ENCODE measurements at regions of chr20 and their contacts with region 1.

Region 1: DNA sequence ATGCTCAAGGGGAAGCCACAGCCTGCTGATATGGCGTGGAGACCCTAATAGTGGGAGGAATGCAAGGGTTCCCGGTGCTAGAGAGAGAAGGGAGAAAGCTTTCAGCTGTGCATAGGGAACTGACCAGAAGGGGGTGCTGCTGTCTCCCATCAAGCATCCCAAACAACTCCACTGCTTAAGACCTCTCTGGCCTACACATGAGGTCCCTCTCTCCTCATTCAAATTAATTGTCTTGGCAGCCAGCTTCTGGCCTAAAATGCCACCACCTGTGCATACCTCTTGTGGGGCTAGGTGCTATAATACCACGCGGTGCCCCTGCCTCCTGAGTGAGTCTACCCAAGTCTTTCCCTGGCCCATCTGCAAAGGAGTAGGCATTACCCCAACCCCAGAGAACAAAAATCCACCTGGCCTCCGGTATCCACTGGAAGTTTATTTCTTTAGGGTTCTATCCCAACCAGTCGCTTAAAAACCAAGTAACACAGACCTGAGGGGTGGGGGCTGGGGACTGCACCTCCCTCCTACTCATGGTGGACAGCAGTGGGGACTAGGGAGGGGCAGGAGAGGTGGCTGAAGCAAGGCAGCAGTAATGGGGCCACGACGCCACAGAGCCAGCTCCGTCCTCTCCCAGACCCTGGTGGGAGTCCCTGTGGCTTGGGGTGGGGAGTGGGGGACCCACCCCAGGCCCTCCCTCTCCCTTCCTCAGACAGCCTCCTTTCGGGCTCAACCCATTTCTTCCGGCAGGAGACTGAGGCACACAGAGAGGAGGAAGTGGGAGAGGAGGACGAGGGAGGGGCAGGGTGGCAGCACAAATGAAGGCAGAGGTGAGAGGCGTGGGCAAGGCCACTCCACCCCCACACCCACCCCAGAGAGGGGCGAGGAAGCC is 14.2 kb downstream of the ADISSP start:
- DNase-seq: peak in 1 of 2 donors; percentile 72
- ATAC-seq: peak; percentile 53 to 87 (median 69)
- H3K4me3 ChIP-seq: no peak overlapping the region
- H3K27ac ChIP-seq: peak overlapping the region in 4 of 10 donors; percentile 16 to 56 (median 39)
- H3K4me1 ChIP-seq: peaks cover 0 to 67% (median 23%) of the 10 kb centered on the region in 9 donors
- H3K27me3 ChIP-seq: peaks cover 0 to 21% (median 9%) of the 10 kb centered on the region in 7 donors
- CTCF ChIP-seq: peak; percentile 60 to 85 (median 79)

Region 2: GRCh38 chr20:3632311-3633004 is 120.9 kb before region 1 on chr20:
- intact Hi-C with region 1: no loop called
- DNase-seq: no peak
- ATAC-seq: no peak
- H3K4me3 ChIP-seq: no peak overlapping the region
- H3K27ac ChIP-seq: no peak overlapping the region
- H3K4me1 ChIP-seq: no peaks in the 10 kb centered on the region
- H3K27me3 ChIP-seq: no peaks in the 10 kb centered on the region
- CTCF ChIP-seq: no peak

Region 3: GRCh38 chr20:3716195-3716834 is 37.0 kb before region 1 on chr20:
- intact Hi-C with region 1: loop called in 3 of 10 experiments (anchors 5 kb)
- DNase-seq: peak; percentile 46 to 48
- ATAC-seq: peak in 7 of 8 donors; percentile 55 to 84 (median 73)
- H3K4me3 ChIP-seq: no peak overlapping the region
- H3K27ac ChIP-seq: no peak overlapping the region
- H3K4me1 ChIP-seq: peaks cover 0 to 27% (median under 1%) of the 10 kb centered on the region in 9 donors
- H3K27me3 ChIP-seq: peaks cover 0 to 4% (median 0%) of the 10 kb centered on the region in 7 donors
- CTCF ChIP-seq: peak; percentile 52 to 86 (median 78)

Region 4: DNA sequence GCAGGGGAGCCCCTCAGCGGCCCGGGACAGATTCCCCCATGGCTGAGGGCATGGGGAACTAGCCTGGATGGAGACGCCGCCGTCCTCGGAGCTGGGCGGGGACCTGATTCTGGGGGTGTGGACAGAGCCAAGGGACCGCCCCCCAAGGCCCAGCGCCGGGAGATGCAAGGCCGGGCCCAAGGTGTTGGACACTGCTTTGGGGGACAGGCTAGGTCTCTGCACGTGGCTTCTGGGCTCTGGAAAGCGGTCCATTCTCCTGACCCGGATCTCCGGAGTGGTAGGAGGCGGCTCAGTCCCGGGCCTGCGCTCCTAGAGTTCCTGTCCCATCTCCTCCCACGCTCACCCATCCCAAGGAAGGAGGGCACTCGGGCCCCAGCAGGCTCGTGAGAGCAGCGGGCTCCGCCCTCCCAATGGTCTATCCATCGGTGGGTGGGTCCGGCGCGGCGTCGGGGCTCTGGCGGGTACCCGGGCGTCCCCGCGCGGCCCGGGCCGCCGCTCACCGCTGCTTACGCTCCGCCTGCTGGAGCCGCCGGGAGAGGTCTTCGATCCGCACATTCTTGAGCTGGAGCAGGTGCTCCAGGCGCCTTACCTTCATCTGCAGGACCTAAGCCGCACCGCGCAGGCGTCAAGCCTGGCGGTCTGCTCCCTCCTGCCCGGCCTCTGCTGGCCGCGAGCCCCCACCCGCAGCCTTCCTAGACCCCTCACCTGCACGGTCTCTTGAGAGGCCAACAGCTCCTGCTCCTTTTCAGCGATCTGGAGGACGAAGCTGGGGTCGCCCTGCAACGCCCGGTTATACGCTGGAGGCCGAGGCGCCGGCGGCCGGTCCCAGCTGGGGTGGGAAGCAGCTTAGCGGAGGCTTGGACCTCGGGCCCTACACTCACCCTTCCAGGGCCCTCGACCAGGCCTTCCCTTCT is 24.6 kb after region 1 on chr20:
- intact Hi-C with region 1: no loop called
- DNase-seq: peak; percentile 65 to 74
- ATAC-seq: peak; percentile 57 to 76 (median 65)
- H3K4me3 ChIP-seq: peak overlapping the region; percentile 30 to 63 (median 58)
- H3K27ac ChIP-seq: peak overlapping the region in 3 of 10 donors; percentile 14 to 32 (median 22)
- H3K4me1 ChIP-seq: peaks cover 16 to 32% (median 19%) of the 10 kb centered on the region in 9 donors
- H3K27me3 ChIP-seq: peaks cover 0 to 17% (median 0%) of the 10 kb centered on the region in 7 donors
- CTCF ChIP-seq: peak in 1 of 9 donors; percentile 30

Measured in heart right ventricle (tissue), 16 donors.